Endothelial cell of umbilical vein (primary cell): ENCODE measurements at regions of chr6 and their contacts with region 1.

Region 1: DNA sequence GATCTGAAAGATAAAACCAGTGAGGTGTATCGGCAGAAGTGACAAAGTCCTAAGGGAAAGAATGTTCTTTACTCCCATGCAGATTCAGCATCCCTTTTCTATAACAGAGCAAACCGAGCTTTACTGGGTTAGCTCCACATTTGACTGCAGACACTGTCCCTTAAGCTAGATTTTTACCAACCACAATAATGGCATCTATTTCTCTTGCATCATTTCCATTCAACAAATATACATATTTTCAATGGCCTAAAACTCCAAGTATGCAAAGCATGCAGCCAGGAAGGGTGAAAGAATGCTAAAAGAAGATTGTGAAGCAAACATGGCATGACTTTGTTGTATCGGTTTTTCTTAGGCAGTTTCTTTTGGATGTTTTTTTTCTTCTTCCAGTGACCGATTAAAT is 255.4 kb downstream of the OGFRL1 start:
- DNase-seq: no peak
- H3K4me3 ChIP-seq: no peak overlapping the region
- H3K27ac ChIP-seq: no peak overlapping the region
- H3K4me1 ChIP-seq: no peaks in the 10 kb centered on the region
- H3K27me3 ChIP-seq: peaks cover 4 to 9% of the 10 kb centered on the region in 2 experiments
- CTCF ChIP-seq: no peak
- POLR2A ChIP-seq: no peak

Region 2: GRCh38 chr6:71496018-71496721 is 47.9 kb before region 1 on chr6:
- CTCF ChIA-PET with region 1: no interaction called
- POLR2A ChIA-PET with region 1: no interaction called
- dilution Hi-C with region 1: no loop called
- intact Hi-C with region 1: no loop called
- DNase-seq: peak; percentile 67
- H3K4me3 ChIP-seq: peak overlapping the region in 2 of 3 experiments; percentile 61 to 74
- H3K27ac ChIP-seq: peak overlapping the region; percentile 66
- H3K4me1 ChIP-seq: peaks cover 17% of the 10 kb centered on the region
- H3K27me3 ChIP-seq: no peaks in the 10 kb centered on the region
- CTCF ChIP-seq: no peak
- POLR2A ChIP-seq: no peak

Region 3: GRCh38 chr6:71727632-71728294 is 183.7 kb after region 1 on chr6:
- CTCF ChIA-PET with region 1: no interaction called
- POLR2A ChIA-PET with region 1: no interaction called
- dilution Hi-C with region 1: no loop called
- intact Hi-C with region 1: loop called (anchors 10 kb)
- DNase-seq: no peak
- H3K4me3 ChIP-seq: no peak overlapping the region
- H3K27ac ChIP-seq: no peak overlapping the region
- H3K4me1 ChIP-seq: no peaks in the 10 kb centered on the region
- H3K27me3 ChIP-seq: peaks cover 0 to 2% of the 10 kb centered on the region in 2 experiments
- CTCF ChIP-seq: no peak
- POLR2A ChIP-seq: no peak